BJ (cell line): ENCODE measurements at regions of chr15 and their contacts with region 1.

Region 1: DNA sequence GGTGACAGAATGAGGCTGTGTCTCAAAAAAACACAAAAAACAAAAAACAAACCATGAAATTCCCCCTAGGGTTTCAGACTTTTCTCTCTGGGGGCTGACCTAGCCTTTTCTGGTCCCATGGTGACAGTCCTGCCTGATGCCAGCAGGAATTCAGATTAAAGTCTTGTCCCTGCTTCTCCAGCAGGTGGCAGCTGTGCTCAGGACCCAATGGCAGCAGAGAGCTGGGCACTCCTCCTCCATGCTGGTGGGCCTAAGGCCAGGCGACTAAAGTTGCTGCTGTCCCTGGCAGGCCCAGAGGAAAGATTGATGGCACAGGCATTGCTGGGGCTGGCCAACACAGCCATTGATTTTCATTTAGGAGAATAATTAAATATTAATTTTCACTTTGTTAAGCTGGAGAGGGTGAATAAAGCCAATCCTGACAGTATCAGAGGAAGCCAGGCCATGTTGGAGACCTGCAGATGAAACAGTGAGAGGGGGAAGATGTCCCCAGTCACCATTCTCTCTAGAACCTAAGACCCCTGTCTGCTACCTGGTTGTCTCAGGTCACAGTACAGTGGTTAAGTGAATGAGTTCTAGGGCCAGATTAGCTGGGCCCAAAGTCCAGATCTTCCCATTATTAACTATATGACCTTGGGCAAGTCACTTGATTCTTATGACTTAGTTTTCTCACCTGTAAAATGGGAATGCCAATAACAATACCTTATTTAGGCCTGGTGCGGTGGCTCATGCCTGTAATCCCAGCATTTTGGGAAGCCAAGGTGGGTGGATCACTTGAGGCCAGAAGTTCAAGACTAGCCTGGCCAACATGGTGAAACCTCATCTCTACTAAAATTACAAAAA is 7.1 kb downstream of the CELF6 start:
- DNase-seq: peak; percentile 5
- H3K4me3 ChIP-seq: no peak overlapping the region
- H3K27me3 ChIP-seq: no peaks in the 10 kb centered on the region; the same call in 1 of the 2 replicates
- CTCF ChIP-seq: peak; percentile 84

Region 2: DNA sequence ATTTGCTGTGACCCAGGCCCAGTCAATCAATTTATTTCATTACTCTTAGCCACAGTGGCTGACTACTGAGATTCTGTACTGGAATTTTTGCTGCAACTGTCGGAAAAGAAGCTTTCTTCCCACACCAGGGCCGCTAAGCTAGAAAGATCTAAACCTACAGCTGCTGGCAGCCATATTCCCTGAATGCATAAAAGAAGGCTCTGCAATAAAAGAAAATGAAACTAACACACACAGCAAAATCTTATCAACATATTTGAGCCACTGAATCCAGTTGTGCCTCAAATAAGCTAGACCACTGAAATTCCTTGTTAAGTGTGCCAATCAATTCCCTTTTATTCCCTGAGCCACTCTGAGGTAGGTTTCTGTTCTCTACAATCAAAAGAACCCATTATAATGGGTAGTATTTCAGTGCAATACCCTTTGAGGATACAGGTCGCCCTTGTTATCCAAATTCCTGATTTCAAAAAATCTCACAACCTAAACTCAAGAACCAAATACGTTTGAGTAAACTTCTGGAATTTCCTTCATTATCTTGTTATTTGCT is 255.2 kb before region 1 on chr15:
- CTCF ChIA-PET with region 1: no interaction called
- POLR2A ChIA-PET with region 1: no interaction called
- DNase-seq: no peak
- H3K4me3 ChIP-seq: no peak overlapping the region
- H3K27me3 ChIP-seq: no peaks in the 10 kb centered on the region
- CTCF ChIP-seq: no peak

Region 3: GRCh38 chr15:72237286-72238224 is 75.3 kb before region 1 on chr15:
- CTCF ChIA-PET with region 1: no interaction called
- POLR2A ChIA-PET with region 1: no interaction called
- DNase-seq: peak; percentile 94
- H3K4me3 ChIP-seq: peak overlapping the region; percentile 34
- H3K27me3 ChIP-seq: no peaks in the 10 kb centered on the region
- CTCF ChIP-seq: no peak

Region 4: DNA sequence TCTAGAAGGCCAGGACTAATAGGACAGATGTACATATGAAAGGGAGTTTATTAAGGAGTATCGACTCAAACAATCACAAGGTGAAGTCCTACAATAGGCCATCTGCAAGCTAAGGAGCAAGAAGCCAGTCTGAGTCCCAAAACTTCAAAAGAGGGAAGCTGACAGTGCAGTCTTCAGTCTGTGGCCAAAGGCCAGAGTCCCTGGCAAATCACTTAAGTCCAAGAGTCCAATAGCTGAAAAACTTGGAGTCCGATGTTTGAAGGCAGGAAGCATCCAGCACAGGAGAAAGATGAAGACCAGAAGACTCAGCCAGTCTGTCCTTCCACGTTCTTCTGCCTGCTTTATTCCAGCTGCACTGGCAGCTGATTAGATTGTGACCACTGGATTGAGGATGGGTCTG is 18.2 kb after region 1 on chr15:
- CTCF ChIA-PET with region 1: interaction called, 10 read pairs
- POLR2A ChIA-PET with region 1: no interaction called
- DNase-seq: no peak
- H3K4me3 ChIP-seq: no peak overlapping the region
- H3K27me3 ChIP-seq: no peaks in the 10 kb centered on the region
- CTCF ChIP-seq: no peak